Activated CD4-positive, alpha-beta memory T cell treated with anti-CD3 and anti-CD28 coated beads, Interleukin-2, amount 10 ng/mL, durations not matched to agents 7 days and 5 days (primary cell): ENCODE measurements at regions of chr17 and their contacts with region 1.

Region 1: DNA sequence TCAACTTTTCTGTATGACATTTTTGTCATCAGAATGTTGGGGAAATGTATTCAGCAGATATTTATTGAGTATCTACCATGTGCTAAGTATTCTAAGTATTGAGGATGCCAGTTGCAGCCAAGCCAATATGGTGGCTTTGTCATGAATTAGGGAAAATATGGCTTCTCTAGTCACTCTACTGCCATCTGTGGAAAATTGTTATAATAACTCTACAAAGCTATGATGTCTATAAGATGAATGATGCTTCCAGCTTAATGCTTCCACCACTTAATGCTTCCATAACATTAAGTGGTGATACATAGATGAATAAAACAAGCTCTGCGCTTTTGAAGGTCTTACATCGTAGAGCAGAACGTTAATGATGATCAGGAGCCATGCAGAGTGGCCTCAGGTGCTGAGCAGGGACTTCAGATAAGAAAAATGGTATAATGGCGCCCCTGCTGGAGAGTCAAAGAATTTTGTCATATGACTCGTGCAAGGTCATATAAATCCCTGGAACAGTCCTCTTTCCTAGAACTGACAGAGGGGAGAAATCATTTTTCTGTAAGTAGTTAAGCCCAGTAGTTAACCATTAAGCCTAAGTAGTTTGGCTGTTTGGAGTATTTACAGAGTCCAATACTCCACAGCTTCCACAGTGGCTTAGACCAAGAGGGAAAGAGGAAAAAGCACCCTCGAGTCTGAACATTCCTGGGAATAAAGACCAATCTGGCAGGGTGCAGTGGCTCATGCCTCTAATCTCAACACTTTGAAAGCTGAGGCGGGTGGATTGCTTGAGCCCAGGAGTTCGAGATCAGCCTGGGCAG is 2.7 kb upstream of the TMIGD1 start:
- DNase-seq: peak; percentile 63
- H3K4me3 Mint-ChIP-seq: no peak overlapping the region
- H3K27ac Mint-ChIP-seq: peak overlapping the region; percentile 34
- H3K4me1 Mint-ChIP-seq: peaks cover 38% of the 10 kb centered on the region
- H3K27me3 Mint-ChIP-seq: peaks cover 3% of the 10 kb centered on the region

Region 2: DNA sequence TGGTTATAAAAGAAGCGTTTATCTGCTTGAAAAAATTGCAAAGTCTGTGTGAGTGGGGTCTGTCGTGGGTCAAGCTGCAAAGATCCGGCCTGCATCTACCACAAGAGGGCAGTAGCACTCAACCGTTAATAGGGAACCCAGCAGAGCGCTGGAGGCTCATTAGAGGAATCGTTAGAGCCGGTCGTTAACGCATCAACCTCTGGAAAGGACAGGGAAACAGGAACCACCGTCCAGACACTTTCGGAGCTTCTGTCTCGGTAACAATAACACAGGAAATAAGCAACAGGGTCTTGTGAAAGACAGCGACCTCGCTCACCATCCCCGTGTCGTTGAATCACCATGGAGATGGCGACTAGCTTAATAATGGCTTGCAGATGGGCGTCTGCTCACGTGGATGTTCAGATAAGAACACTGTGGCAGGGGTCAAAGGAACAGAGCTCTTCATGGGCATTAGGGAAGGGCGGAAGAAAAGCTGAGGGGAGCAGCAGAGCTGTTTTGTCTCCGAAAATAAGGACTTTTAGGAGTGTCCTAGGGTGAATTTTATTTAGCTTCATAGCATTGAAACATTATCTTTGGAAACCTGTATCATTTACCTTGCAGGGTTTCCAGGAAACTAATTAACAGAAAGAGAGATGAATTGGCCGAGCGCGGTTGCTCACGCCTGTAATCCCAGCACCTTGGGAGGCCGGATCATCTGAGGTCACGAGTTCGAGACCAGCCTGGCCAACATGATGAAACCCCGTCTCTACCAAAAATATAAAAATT is 231.8 kb before region 1 on chr17:
- CTCF ChIA-PET with region 1: interaction called, 169 read pairs
- POLR2A ChIA-PET with region 1: interaction called, 4 read pairs
- DNase-seq: peak; percentile 75
- H3K4me3 Mint-ChIP-seq: peak overlapping the region; percentile 63
- H3K27ac Mint-ChIP-seq: no peak overlapping the region
- H3K4me1 Mint-ChIP-seq: peaks cover 8% of the 10 kb centered on the region
- H3K27me3 Mint-ChIP-seq: peaks cover 8% of the 10 kb centered on the region

Region 3: GRCh38 chr17:30124273-30124796 is 212.2 kb before region 1 on chr17:
- CTCF ChIA-PET with region 1: interaction called, 87 read pairs
- POLR2A ChIA-PET with region 1: interaction called, 9 read pairs
- DNase-seq: no peak
- H3K4me3 Mint-ChIP-seq: no peak overlapping the region
- H3K27ac Mint-ChIP-seq: no peak overlapping the region
- H3K4me1 Mint-ChIP-seq: peaks cover 39% of the 10 kb centered on the region
- H3K27me3 Mint-ChIP-seq: no peaks in the 10 kb centered on the region

Region 4: DNA sequence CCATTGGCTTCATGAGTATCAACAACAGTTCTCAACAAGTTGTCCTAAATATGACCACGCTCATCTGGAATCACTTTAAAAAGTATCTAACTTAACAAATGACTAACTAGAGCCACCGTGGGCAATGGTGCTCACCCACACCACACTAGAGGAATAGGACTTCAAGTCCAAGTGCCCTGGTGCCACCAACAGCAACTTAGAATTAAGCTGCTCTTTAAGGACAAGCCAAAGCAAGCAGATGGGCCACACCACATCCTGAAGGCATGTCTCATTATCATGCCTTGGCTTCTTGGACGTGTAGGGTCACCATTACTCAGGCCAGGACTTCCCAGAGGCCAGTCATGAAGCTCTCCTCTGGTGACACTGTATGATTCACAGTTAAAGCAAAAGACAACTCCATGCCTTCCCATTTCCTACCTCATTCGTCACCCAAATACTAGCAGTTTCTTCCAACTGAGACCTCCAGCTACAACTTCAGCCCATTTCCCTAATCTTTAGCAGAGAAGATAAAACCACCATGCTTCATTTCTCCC is 91.7 kb before region 1 on chr17:
- CTCF ChIA-PET with region 1: no interaction called
- POLR2A ChIA-PET with region 1: no interaction called
- DNase-seq: no peak
- H3K4me3 Mint-ChIP-seq: no peak overlapping the region
- H3K27ac Mint-ChIP-seq: no peak overlapping the region
- H3K4me1 Mint-ChIP-seq: no peaks in the 10 kb centered on the region
- H3K27me3 Mint-ChIP-seq: peaks cover 2% of the 10 kb centered on the region

Region 5: GRCh38 chr17:30291543-30292285 is 44.9 kb before region 1 on chr17 and contains the start of gene BLMH:
- CTCF ChIA-PET with region 1: interaction called, 33 read pairs
- POLR2A ChIA-PET with region 1: interaction called, 25 read pairs
- DNase-seq: peak; percentile 87
- H3K4me3 Mint-ChIP-seq: peak within 1 kb of the TSS; percentile 86
- H3K27ac Mint-ChIP-seq: peak within 1 kb of the TSS; percentile 83
- H3K4me1 Mint-ChIP-seq: peaks cover 22% of the 10 kb centered on the region
- H3K27me3 Mint-ChIP-seq: no peaks in the 10 kb centered on the region
- total RNA-seq, gene BLMH: 47.3 to 52.8 TPM

Region 6: GRCh38 chr17:30309591-30309990 is 27.0 kb before region 1 on chr17:
- CTCF ChIA-PET with region 1: no interaction called
- POLR2A ChIA-PET with region 1: no interaction called
- DNase-seq: no peak
- H3K4me3 Mint-ChIP-seq: no peak overlapping the region
- H3K27ac Mint-ChIP-seq: no peak overlapping the region
- H3K4me1 Mint-ChIP-seq: no peaks in the 10 kb centered on the region
- H3K27me3 Mint-ChIP-seq: peaks cover 11% of the 10 kb centered on the region

Region 7: DNA sequence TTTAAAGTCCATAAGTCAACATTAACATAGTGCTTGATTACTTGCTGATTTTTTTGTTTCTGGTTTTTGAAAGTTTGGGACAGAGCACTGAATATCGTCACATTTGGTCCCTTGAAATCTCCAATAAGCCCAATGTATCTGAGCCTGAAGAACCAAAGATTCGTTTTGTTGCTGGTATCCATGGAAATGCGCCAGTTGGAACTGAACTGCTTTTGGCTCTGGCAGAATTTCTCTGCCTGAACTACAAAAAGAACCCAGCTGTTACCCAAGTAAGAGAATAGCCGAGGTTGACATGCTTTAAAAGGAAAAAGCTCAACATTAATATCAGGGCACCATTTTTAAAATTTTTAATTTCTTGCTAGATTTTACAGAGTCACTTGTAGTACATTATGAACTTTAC is 112.9 kb after region 1 on chr17:
- CTCF ChIA-PET with region 1: no interaction called
- POLR2A ChIA-PET with region 1: no interaction called
- DNase-seq: no peak
- H3K4me3 Mint-ChIP-seq: no peak overlapping the region
- H3K27ac Mint-ChIP-seq: no peak overlapping the region
- H3K4me1 Mint-ChIP-seq: no peaks in the 10 kb centered on the region
- H3K27me3 Mint-ChIP-seq: no peaks in the 10 kb centered on the region

Region 8: GRCh38 chr17:30477083-30477773 is 140.7 kb after region 1 on chr17 and contains the start of gene GOSR1:
- CTCF ChIA-PET with region 1: interaction called, 14 read pairs
- POLR2A ChIA-PET with region 1: interaction called, 4 read pairs
- DNase-seq: peak; percentile 95
- H3K4me3 Mint-ChIP-seq: peak within 1 kb of the TSS; percentile 88
- H3K27ac Mint-ChIP-seq: peak within 1 kb of the TSS; percentile 85
- H3K4me1 Mint-ChIP-seq: peaks cover 39% of the 10 kb centered on the region
- H3K27me3 Mint-ChIP-seq: no peaks in the 10 kb centered on the region
- total RNA-seq, gene GOSR1: 45.5 to 45.7 TPM